ENCODE measurements at regions of chr7 and their contacts with region 1.

Region 1: GRCh38 chr7:106041140-106041717 is 70.9 kb downstream of the SYPL1 start:
- DNase-seq: peak; percentile 71
- H3K4me3 ChIP-seq: no peak overlapping the region
- H3K27ac ChIP-seq: no peak overlapping the region
- H3K4me1 ChIP-seq: peaks cover 34% of the 10 kb centered on the region
- H3K27me3 ChIP-seq: no peaks in the 10 kb centered on the region
- CTCF ChIP-seq: peak; percentile 80

Region 2: GRCh38 chr7:105131033-105131656 is 910.1 kb before region 1 on chr7:
- CTCF ChIA-PET with region 1: no interaction called
- POLR2A ChIA-PET with region 1: no interaction called
- intact Hi-C with region 1: loop called (anchors 10 kb)
- DNase-seq: no peak
- H3K4me3 ChIP-seq: no peak overlapping the region
- H3K27ac ChIP-seq: no peak overlapping the region
- H3K4me1 ChIP-seq: no peaks in the 10 kb centered on the region
- H3K27me3 ChIP-seq: no peaks in the 10 kb centered on the region
- CTCF ChIP-seq: no peak

Region 3: GRCh38 chr7:105589356-105590077 is 451.7 kb before region 1 on chr7:
- CTCF ChIA-PET with region 1: no interaction called
- POLR2A ChIA-PET with region 1: no interaction called
- intact Hi-C with region 1: loop called (anchors 5 kb)
- DNase-seq: peak; percentile 91
- H3K4me3 ChIP-seq: no peak overlapping the region
- H3K27ac ChIP-seq: no peak overlapping the region
- H3K4me1 ChIP-seq: no peaks in the 10 kb centered on the region
- H3K27me3 ChIP-seq: no peaks in the 10 kb centered on the region
- CTCF ChIP-seq: peak; percentile 83

Region 4: GRCh38 chr7:105876091-105876963 is 164.9 kb before region 1 on chr7 and contains the start of gene ATXN7L1:
- CTCF ChIA-PET with region 1: interaction called, 5 read pairs
- POLR2A ChIA-PET with region 1: no interaction called
- intact Hi-C with region 1: loop called (anchors 2 kb)
- DNase-seq: peak; percentile 99
- H3K4me3 ChIP-seq: peak within 1 kb of the TSS; percentile 77
- H3K27ac ChIP-seq: peak within 1 kb of the TSS; percentile 93
- H3K4me1 ChIP-seq: no peaks in the 10 kb centered on the region
- H3K27me3 ChIP-seq: no peaks in the 10 kb centered on the region
- CTCF ChIP-seq: peak; percentile 40; the same call in 1 of the 2 replicates
- total RNA-seq, gene ATXN7L1: 29.9 and 32.8 TPM in 2 replicates

Region 5: DNA sequence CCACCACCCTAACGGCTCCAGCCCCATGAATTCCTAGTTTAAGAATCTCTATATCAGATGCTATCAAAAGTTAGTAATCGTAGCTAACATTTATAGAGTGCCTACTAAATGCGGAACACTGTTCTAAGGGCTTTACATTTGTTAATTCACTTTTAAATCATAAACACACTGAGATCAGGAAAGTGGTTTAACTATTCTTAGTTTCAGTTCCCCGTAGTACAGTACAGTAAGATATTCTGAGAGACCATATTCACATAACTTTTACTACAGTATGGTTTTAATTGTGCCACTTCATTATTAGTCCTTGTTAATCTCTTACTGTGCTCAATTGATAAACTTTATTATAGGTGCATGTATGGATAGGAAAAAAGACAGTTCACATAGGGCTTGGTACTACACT is 48.4 kb after region 1 on chr7:
- CTCF ChIA-PET with region 1: no interaction called
- POLR2A ChIA-PET with region 1: no interaction called
- intact Hi-C with region 1: no loop called
- DNase-seq: no peak
- H3K4me3 ChIP-seq: no peak overlapping the region
- H3K27ac ChIP-seq: no peak overlapping the region
- H3K4me1 ChIP-seq: no peaks in the 10 kb centered on the region
- H3K27me3 ChIP-seq: no peaks in the 10 kb centered on the region
- CTCF ChIP-seq: no peak

Region 6: GRCh38 chr7:106285051-106285854 is 244.0 kb after region 1 on chr7:
- CTCF ChIA-PET with region 1: no interaction called
- POLR2A ChIA-PET with region 1: no interaction called
- intact Hi-C with region 1: no loop called
- DNase-seq: peak; percentile 97
- H3K4me3 ChIP-seq: peak overlapping the region; percentile 69
- H3K27ac ChIP-seq: peak overlapping the region; percentile 84
- H3K4me1 ChIP-seq: peaks cover 5% of the 10 kb centered on the region
- H3K27me3 ChIP-seq: no peaks in the 10 kb centered on the region
- CTCF ChIP-seq: no peak